CD8-positive, alpha-beta T cell (primary cell): ENCODE measurements at regions of chr21 and their contacts with region 1.

Region 1: DNA sequence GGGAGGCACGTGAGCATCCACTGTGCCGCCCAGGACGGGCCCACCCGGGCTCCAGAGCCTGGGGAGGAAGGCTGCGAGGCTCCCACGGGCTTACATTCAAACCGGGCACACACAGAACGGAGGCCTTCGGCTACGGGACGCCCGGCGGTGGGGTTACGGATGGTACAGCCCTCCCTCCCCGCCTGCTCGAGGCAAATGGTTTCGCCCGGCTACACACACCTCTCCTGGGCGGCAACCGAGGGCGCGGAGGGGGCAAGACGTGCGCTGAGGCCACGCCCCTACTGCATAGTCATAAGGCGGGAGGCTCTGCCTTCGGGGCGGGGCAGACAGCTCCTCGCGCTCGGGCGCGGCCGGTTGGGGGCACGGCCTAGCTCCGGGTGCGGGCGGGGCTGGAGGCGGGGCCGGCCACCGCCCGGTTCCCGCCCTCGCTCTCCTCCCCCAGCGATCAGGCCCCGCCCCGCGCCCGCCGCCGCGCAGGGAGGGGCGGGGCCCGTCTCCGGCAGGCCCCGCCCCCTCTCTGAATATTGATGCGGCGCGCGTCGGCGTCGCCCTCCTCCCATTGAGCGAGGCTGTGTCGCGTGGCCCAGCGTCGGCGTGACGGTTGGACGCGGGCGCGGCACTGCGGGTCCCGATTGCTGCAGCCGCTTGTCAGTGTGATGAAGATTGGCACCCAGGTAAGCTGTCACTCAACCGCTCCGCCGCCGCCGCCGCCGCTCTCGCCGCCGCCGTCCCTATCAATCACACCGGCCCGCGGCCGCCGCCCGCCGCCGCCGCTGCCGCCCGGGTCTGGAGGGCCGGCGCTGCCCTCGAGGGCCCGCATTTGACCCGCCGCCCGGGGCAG is at the start of gene PKNOX1:
- DNase-seq: peak; percentile 98 to 100 (median 99)
- ATAC-seq: peak; percentile 85
- H3K4me3 ChIP-seq: peak within 1 kb of the TSS; percentile 83 to 87
- H3K4me3 Mint-ChIP-seq: peak within 1 kb of the TSS; percentile 91
- H3K27ac ChIP-seq: peak within 1 kb of the TSS; percentile 81 to 98
- H3K27ac Mint-ChIP-seq: peak within 1 kb of the TSS; percentile 94
- H3K4me1 ChIP-seq: peaks cover 18% of the 10 kb centered on the region
- H3K4me1 Mint-ChIP-seq: peaks cover 22% of the 10 kb centered on the region
- H3K27me3 ChIP-seq: no peaks in the 10 kb centered on the region
- H3K27me3 Mint-ChIP-seq: no peaks in the 10 kb centered on the region
- CTCF ChIP-seq: no peak
- total RNA-seq, gene PKNOX1: 10.3 to 11.1 TPM

Region 2: DNA sequence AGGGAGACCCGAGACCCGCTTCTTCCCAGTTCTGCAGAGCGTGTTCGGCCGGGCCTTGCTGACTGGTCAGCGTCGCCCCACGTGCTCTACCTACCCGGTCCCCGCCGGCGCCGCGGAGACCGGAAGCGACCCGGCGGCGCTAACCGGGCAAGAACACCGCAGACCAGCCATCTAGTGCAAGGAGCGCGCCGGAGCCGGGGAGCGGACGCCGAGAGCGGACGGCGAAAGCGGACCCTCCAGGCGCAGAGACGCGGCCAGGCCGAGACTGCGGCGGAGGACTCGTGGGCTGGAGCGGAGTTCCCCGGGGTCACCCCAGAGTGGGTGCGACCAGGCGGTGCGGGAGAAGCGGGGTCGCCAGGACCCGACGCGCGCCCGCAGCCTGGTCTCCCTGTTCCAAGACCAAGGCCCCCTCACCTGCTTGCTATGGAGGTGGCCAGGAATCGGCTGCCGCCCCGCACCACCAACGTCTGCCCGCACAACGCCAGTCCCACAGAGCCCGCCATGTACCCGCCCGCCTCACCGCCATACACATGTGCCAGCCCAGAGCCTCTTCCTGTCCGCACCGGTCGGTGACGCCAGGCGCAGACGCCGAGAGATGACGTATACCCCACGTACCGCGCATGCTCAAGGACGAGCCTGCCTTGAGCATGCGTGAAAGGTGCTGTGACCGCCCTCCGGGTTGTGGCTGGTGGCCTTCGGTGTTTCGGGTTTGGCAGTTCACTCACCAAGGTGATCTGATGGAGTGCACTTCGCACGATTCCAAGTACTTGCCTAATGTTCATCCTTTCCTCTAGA is 95.0 kb before region 1 on chr21 and contains the start of gene WDR4:
- CTCF ChIA-PET with region 1: no interaction called
- POLR2A ChIA-PET with region 1: interaction called, 3 read pairs
- intact Hi-C with region 1: loop called (anchors 1 kb)
- DNase-seq: peak; percentile 98 to 100 (median 99)
- ATAC-seq: peak; percentile 87
- H3K4me3 ChIP-seq: peak within 1 kb of the TSS; percentile 65 to 85
- H3K4me3 Mint-ChIP-seq: peak within 1 kb of the TSS; percentile 97
- H3K27ac ChIP-seq: peak within 1 kb of the TSS; percentile 76 to 87
- H3K27ac Mint-ChIP-seq: peak within 1 kb of the TSS; percentile 99
- H3K4me1 ChIP-seq: peaks cover 16% of the 10 kb centered on the region
- H3K4me1 Mint-ChIP-seq: peaks cover 30% of the 10 kb centered on the region
- H3K27me3 ChIP-seq: no peaks in the 10 kb centered on the region
- H3K27me3 Mint-ChIP-seq: no peaks in the 10 kb centered on the region
- CTCF ChIP-seq: no peak
- total RNA-seq, gene WDR4: 13.2 to 13.3 TPM

Region 3: GRCh38 chr21:43362321-43362791 is 388.1 kb after region 1 on chr21:
- CTCF ChIA-PET with region 1: no interaction called
- POLR2A ChIA-PET with region 1: no interaction called
- intact Hi-C with region 1: loop called in 1 of 2 experiments (anchors 10 kb)
- DNase-seq: peak; percentile 68 to 97 (median 85)
- ATAC-seq: peak; percentile 86
- H3K4me3 ChIP-seq: peak overlapping the region; percentile 32 to 44
- H3K4me3 Mint-ChIP-seq: peak overlapping the region; percentile 75
- H3K27ac ChIP-seq: peak overlapping the region; percentile 85 to 91
- H3K27ac Mint-ChIP-seq: peak overlapping the region; percentile 96
- H3K4me1 ChIP-seq: peaks cover 26% of the 10 kb centered on the region
- H3K4me1 Mint-ChIP-seq: peaks cover 23% of the 10 kb centered on the region
- H3K27me3 ChIP-seq: no peaks in the 10 kb centered on the region
- H3K27me3 Mint-ChIP-seq: no peaks in the 10 kb centered on the region
- CTCF ChIP-seq: no peak

Region 4: DNA sequence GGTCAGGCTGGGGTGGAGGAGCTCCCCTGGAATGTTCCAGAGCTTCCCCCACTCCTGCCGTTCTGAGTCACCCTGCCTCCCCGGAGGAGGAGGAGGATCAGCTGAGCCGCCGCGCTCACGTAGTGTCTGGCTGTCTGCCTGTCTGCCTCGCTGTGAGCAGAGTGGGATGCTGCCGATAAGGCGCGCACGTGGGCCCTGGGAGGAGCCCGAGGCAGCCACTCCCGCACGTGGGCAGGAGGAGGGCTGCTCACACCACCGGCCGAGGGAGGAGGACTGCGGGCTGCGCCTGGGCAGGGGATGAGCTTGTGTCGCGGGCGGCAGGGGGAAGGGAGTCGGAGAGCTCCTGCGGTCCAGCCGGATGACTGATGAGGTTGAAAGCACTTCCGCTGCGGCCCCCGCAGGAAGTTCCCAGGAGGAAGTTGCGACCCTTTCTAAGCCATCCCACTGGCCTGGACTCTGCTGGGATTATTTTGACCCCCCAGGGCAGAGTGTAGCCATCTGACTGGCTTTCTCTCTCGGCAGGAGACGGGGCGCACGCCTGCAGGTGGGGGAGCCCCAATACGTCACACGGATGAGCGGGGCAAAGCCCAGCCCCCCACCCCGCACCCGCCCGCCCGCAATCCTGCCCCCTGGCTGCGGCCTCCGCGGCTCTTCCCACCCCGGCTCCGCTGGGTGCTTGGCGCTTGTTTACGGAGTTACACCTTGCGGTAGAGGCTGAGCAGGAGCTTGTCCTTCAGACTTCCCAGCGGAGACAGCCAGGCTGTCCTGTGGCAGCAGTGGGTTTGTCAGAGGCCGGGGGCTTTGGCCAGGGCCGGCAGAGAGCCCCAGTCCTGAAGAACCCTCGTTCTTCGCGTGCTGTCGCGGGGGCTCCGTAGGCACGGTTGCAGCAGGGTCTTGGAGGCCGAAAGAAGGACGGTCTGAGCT is 754.5 kb after region 1 on chr21:
- CTCF ChIA-PET with region 1: no interaction called
- POLR2A ChIA-PET with region 1: no interaction called
- intact Hi-C with region 1: loop called in 1 of 2 experiments (anchors 10 kb)
- DNase-seq: peak; percentile 57 to 94 (median 76)
- ATAC-seq: peak; percentile 88
- H3K4me3 ChIP-seq: peak overlapping the region; percentile 44 to 58
- H3K4me3 Mint-ChIP-seq: peak overlapping the region; percentile 87
- H3K27ac ChIP-seq: peak overlapping the region in 1 of 2 experiments; percentile 81
- H3K27ac Mint-ChIP-seq: peak overlapping the region; percentile 87
- H3K4me1 ChIP-seq: peaks cover 31% of the 10 kb centered on the region
- H3K4me1 Mint-ChIP-seq: peaks cover 42% of the 10 kb centered on the region
- H3K27me3 ChIP-seq: no peaks in the 10 kb centered on the region
- H3K27me3 Mint-ChIP-seq: no peaks in the 10 kb centered on the region
- CTCF ChIP-seq: peak; percentile 22

Region 5: DNA sequence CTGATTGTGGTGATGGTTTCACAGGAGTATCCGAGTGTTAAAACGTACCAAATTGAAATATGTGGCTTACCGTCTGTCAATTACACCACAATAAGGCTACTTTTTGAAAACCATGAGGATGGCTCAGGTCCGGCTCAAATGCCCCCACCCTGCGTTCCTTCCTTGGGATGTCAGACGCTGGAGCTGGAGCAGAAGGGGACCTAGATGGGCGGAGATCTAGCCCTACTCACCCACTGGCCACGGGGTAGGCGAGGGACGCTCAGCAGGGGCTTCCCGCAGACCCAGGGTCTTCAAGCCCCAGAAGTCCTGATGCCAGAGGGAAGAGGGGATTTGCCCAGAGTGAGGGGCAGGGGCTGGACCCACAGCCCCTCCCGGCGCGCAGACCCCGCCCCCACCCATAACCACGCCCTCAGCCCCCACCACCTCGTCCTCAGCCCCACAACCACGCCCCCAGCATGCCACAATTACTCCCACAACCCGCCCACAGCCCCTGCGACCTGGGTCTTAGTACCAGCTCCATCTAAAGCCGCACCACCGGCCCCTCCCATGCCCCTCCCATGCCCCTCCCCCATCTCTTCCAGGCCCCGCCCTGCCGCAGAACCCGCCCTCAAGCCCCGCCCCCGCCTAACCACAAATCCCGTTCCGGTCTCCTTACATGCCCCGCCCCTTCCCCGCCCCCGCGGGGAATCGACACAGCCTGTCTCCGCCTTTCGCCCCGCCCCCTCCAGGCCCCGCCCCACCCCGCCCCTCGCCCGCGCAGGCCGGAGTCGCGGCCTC is 1480.7 kb after region 1 on chr21 and contains the start of gene LRRC3:
- CTCF ChIA-PET with region 1: no interaction called
- POLR2A ChIA-PET with region 1: no interaction called
- intact Hi-C with region 1: loop called in 1 of 2 experiments (anchors 10 kb)
- DNase-seq: peak; percentile 58 to 89 (median 76)
- ATAC-seq: peak; percentile 86
- H3K4me3 ChIP-seq: peak within 1 kb of the TSS; percentile 50 to 69
- H3K4me3 Mint-ChIP-seq: peak within 1 kb of the TSS; percentile 80
- H3K27ac ChIP-seq: no peak within 1 kb of the TSS
- H3K27ac Mint-ChIP-seq: no peak within 1 kb of the TSS
- H3K4me1 ChIP-seq: peaks cover 9% of the 10 kb centered on the region
- H3K4me1 Mint-ChIP-seq: peaks cover 5% of the 10 kb centered on the region
- H3K27me3 ChIP-seq: no peaks in the 10 kb centered on the region
- H3K27me3 Mint-ChIP-seq: peaks cover 5% of the 10 kb centered on the region
- CTCF ChIP-seq: no peak
- total RNA-seq, gene LRRC3: 0.39 to 0.68 TPM